ENCODE measurements at regions of chrX and their contacts with region 1.

Region 1: DNA sequence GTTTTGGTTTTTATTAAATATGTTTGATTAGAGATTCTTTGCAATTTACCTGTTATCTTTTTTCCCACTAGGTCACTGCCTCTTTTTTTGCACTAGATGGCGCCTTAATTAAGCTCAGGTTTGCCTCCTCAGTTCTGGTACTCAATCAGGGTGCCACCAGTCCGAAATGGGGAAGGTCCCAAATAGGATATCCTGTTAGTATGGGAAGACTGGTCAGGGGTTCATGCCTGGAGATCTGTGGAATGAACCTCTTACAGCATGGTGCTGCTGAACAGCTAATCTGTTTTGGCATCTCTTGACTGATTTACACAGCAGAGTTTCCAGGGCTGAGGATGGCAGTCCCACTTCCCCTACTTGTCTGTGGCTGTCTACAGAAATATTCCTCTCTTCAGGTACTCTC is 24.2 kb upstream of the VSIG1 start:
- DNase-seq: peak; percentile 58
- H3K4me3 Mint-ChIP-seq: peak overlapping the region; percentile 61
- H3K27ac Mint-ChIP-seq: no peak overlapping the region
- H3K4me1 Mint-ChIP-seq: peaks cover 31% of the 10 kb centered on the region
- H3K27me3 Mint-ChIP-seq: no peaks in the 10 kb centered on the region

Region 2: GRCh38 chrX:108055546-108055945 is 34.9 kb after region 1 on chrX:
- intact Hi-C with region 1: loop called (anchors 5 kb)
- DNase-seq: no peak
- H3K4me3 Mint-ChIP-seq: no peak overlapping the region
- H3K27ac Mint-ChIP-seq: no peak overlapping the region
- H3K4me1 Mint-ChIP-seq: no peaks in the 10 kb centered on the region
- H3K27me3 Mint-ChIP-seq: peaks cover 17% of the 10 kb centered on the region

Region 3: DNA sequence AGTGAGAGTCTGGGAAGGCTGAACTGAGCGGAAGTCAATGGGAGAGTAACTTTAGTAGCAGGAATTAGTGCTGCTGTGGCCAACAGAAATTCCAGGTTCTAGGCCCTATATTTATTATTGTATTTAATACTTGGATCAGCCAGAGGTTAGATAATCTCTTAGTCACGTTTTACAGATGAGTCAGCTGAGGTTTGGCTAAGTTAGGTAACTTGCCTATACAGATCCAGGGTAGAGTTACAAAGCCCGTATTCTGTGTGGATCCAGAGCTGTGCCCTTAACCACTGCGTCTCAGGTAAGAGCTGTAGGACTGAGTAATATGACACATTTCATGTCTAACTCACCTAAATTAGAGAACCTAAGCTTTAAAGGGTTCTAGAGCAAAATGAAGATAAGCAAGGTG is 50.3 kb after region 1 on chrX:
- intact Hi-C with region 1: loop called (anchors 5 kb)
- DNase-seq: no peak
- H3K4me3 Mint-ChIP-seq: no peak overlapping the region
- H3K27ac Mint-ChIP-seq: no peak overlapping the region
- H3K4me1 Mint-ChIP-seq: no peaks in the 10 kb centered on the region
- H3K27me3 Mint-ChIP-seq: peaks cover 4% of the 10 kb centered on the region

Region 4: DNA sequence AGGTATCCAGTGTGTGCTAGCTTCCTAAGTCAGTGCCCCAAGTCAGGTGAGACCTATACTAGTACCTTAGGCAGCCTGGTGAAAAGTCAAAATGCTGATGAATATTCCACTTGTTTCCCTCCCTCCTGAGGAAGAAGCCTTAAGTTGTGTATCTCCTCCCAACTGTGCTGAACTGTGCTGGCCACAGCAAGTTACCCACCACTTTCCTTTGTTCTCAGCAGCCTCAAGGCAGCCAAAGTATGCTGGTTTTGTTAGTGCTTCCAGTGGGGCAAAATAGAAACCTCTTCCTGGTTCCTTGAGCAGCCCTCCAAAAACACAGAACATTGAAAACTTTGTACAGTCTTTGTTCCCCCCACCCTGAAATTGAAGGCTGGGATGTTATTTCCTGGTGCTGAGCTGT is 84.8 kb after region 1 on chrX:
- intact Hi-C with region 1: no loop called
- DNase-seq: no peak
- H3K4me3 Mint-ChIP-seq: no peak overlapping the region
- H3K27ac Mint-ChIP-seq: no peak overlapping the region
- H3K4me1 Mint-ChIP-seq: no peaks in the 10 kb centered on the region
- H3K27me3 Mint-ChIP-seq: no peaks in the 10 kb centered on the region

Measured in activated CD4-positive, alpha-beta T cell treated with anti-CD3 and anti-CD28 coated beads, Interleukin-2, amount 10 ng/mL, durations not matched to agents 24 days and 14 days (primary cell).